ENCODE measurements at regions of chr12 and their contacts with region 1.

Region 1: GRCh38 chr12:122851820-122852219 is 16.6 kb downstream of the HIP1R start:
- DNase-seq: peak; percentile 39 to 91
- H3K4me3 ChIP-seq: peak overlapping the region in 1 of 2 donors; percentile 22
- H3K27ac ChIP-seq: peak overlapping the region; percentile 86 to 92
- H3K4me1 ChIP-seq: peaks cover 25 to 42% of the 10 kb centered on the region in 2 donors
- H3K27me3 ChIP-seq: no peaks in the 10 kb centered on the region
- CTCF ChIP-seq: no peak

Region 2: GRCh38 chr12:122500685-122501488 is 350.9 kb before region 1 on chr12 and contains the start of gene ZCCHC8:
- intact Hi-C with region 1: no loop called
- DNase-seq: peak; percentile 92 to 97
- H3K4me3 ChIP-seq: peak within 1 kb of the TSS; percentile 78 to 88
- H3K27ac ChIP-seq: peak within 1 kb of the TSS; percentile 97 to 99
- H3K4me1 ChIP-seq: peaks cover 7 to 9% of the 10 kb centered on the region in 2 donors
- H3K27me3 ChIP-seq: no peaks in the 10 kb centered on the region
- CTCF ChIP-seq: no peak
- total RNA-seq, gene ZCCHC8: 6.4 TPM

Region 3: DNA sequence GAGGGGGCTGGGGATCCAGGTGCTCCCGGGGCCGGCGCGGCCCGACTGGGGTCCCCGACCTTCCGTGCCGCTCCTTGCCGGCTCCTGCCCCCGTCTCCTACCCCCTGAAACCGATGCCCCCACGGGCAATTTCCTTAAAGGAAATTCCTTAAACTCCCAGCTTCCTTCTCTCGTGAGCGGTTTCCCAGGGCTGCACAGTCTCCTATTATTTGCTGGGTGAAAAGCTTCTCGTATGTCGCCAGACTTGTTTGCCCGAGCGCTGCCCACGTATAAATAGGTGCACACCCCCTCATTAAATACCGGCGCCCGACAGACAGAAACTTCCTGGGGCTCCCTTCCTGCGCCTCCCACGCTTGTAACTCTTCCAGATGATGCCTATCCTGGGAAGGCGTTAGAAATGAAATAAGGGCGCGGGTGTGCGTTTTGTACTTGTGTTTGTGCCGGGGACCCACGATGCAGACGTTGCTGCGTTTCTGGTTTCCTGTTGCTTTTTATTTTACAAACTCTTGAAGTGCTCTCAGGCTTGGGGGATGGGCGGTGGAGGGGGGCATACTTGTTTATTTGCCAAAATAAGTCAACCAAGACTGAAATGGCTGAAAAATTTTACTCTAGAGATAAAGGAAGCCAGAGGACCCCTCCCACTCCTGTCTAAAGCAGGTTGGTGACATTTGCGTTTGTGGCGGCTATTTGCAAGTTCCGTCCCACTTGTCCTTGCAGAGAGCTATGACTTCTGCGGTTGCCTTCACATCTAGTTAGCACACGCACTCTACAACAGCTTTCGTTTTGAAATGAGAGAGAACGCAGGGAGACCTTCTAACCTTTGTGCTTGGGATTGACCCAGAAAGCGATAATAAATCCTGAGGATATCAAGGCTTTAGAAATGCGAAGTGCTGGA is 15.5 kb before region 1 on chr12:
- intact Hi-C with region 1: loop called (anchors 1 kb)
- DNase-seq: no peak
- H3K4me3 ChIP-seq: peak overlapping the region; percentile 68 to 75
- H3K27ac ChIP-seq: peak overlapping the region; percentile 59 to 60
- H3K4me1 ChIP-seq: peaks cover 2 to 13% of the 10 kb centered on the region in 2 donors
- H3K27me3 ChIP-seq: no peaks in the 10 kb centered on the region
- CTCF ChIP-seq: no peak

Region 4: DNA sequence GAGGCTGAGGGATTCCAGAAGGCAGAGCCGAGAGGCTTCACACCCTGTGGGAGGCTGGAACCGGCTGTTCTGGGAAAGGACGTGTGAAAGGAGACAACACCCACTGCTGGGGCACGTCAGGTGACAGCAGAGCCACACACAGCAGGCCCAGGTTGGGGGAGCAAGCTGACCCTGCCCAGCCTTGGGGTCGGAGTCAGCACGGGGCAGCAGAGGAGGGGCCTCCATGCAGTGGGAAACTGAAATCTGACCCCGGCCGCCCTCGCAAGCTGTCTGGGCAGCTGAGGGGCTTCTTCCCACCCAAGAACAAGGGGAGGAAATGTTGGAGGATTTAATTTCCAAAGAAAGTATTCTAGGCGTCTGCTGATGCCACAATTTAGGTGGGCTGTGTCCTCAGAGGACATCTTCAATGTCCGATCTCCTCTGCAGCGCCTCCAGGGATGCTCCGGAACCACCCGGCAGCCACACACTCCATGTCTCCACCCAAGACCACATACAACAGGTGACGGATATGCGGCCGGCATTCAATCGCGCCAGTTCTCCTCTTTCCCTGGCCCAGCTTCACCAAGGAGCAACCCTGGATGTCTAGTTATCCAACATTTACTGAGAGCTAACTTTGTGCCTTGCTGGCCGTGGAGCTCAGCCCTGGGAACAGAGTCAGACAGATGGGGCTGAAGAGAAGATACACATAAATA is 636.9 kb after region 1 on chr12:
- intact Hi-C with region 1: no loop called
- DNase-seq: no peak
- H3K4me3 ChIP-seq: no peak overlapping the region
- H3K27ac ChIP-seq: peak overlapping the region in 1 of 2 donors; percentile 34
- H3K4me1 ChIP-seq: peaks cover 0 to 3% of the 10 kb centered on the region in 2 donors
- H3K27me3 ChIP-seq: no peaks in the 10 kb centered on the region
- CTCF ChIP-seq: no peak

Measured in ascending aorta (tissue), 2 donors.